Activated CD4-positive, alpha-beta T cell treated with anti-CD3 and anti-CD28 coated beads, Interleukin-2, amount 10 ng/mL, durations not matched to agents 24 days and 14 days (primary cell): ENCODE measurements at regions of chr1 and their contacts with region 1.

Region 1: GRCh38 chr1:236120721-236121153 is 21.6 kb upstream of the GPR137B start:
- DNase-seq: peak; percentile 69
- H3K4me3 Mint-ChIP-seq: peak overlapping the region; percentile 70
- H3K27ac Mint-ChIP-seq: peak overlapping the region; percentile 34
- H3K4me1 Mint-ChIP-seq: peaks cover 33% of the 10 kb centered on the region
- H3K27me3 Mint-ChIP-seq: peaks cover 20% of the 10 kb centered on the region

Region 2: DNA sequence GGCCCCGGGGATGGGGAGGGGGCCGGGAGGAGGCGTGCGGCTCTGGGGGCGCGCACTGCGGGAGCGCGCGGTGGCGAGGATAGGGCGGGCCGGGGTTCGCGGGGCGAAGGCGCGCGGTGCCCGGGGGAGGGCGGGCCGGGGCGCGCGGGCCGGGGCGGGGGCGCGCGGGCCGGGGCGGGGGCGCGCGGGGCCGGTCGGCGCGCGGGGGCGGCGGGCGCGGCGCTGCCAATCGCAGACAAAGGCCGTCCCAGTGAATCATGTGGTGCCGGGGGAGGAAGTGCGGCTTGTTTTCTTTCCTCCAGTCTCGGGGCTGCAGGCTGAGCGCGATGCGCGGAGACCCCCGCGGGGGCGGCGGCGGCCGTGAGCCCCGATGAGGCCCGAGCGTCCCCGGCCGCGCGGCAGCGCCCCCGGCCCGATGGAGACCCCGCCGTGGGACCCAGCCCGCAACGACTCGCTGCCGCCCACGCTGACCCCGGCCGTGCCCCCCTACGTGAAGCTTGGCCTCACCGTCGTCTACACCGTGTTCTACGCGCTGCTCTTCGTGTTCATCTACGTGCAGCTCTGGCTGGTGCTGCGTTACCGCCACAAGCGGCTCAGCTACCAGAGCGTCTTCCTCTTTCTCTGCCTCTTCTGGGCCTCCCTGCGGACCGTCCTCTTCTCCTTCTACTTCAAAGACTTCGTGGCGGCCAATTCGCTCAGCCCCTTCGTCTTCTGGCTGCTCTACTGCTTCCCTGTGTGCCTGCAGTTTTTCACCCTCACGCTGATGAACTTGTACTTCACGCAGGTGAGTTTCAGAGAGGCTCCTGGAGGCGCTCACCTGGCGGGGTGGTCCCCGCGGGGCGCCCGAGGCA is 21.7 kb after region 1 on chr1 and contains the start of gene GPR137B:
- intact Hi-C with region 1: loop called (anchors 2 kb)
- DNase-seq: peak; percentile 88
- H3K4me3 Mint-ChIP-seq: peak within 1 kb of the TSS; percentile 92
- H3K27ac Mint-ChIP-seq: peak within 1 kb of the TSS; percentile 82
- H3K4me1 Mint-ChIP-seq: peaks cover 28% of the 10 kb centered on the region
- H3K27me3 Mint-ChIP-seq: peaks cover 37% of the 10 kb centered on the region
- total RNA-seq, gene GPR137B: 6.6 and 7.7 TPM in 2 replicates

Region 3: DNA sequence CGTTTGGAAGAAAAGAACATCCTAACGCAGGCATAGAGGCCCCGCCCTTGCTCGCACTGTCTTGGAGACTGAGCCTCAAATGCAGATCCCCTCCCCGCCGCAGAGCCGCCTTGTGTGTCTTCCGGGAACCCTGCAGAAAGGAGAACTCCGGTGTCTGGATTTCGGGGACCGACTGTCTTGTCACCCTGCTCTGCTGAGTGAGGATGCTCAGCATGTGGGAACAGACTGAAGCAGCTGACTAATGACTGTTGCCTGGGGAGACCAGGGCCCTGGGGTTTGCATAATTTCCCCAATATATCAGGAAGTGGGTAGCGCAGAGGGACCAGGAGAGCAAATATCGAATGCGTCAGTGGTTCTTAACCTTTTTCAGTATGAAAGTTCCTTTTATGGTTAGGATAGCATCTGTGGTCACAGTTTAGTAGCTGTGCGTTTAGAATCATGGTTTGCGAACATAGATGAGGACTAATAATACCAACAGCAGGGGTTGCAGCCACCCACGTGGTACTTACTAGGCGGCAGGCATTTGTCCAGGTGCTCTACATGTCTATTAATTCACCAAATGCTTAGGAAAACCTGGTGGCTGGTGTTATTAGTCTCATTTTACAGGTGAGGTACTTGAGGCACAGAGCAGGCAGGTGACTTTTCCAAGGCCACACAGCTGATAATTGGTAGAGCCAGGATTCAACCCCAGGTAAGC is 35.9 kb after region 1 on chr1:
- intact Hi-C with region 1: no loop called
- DNase-seq: no peak
- H3K4me3 Mint-ChIP-seq: no peak overlapping the region
- H3K27ac Mint-ChIP-seq: no peak overlapping the region
- H3K4me1 Mint-ChIP-seq: peaks cover 4% of the 10 kb centered on the region
- H3K27me3 Mint-ChIP-seq: no peaks in the 10 kb centered on the region

Region 4: GRCh38 chr1:236214761-236215160 is 94.0 kb after region 1 on chr1:
- intact Hi-C with region 1: loop called (anchors 5 kb)
- DNase-seq: no peak
- H3K4me3 Mint-ChIP-seq: no peak overlapping the region
- H3K27ac Mint-ChIP-seq: no peak overlapping the region
- H3K4me1 Mint-ChIP-seq: peaks cover 3% of the 10 kb centered on the region
- H3K27me3 Mint-ChIP-seq: no peaks in the 10 kb centered on the region